Heart right ventricle (tissue), 16 donors: ENCODE measurements at regions of chr11 and their contacts with region 1.

Region 1: GRCh38 chr11:73590991-73591390 is 6.9 kb downstream of the FAM168A start:
- DNase-seq: no peak
- ATAC-seq: no peak
- H3K4me3 ChIP-seq: no peak overlapping the region
- H3K27ac ChIP-seq: no peak overlapping the region
- H3K4me1 ChIP-seq: peaks cover 0 to 13% (median 5%) of the 10 kb centered on the region in 9 donors
- H3K27me3 ChIP-seq: no peaks in the 10 kb centered on the region
- CTCF ChIP-seq: no peak

Region 2: DNA sequence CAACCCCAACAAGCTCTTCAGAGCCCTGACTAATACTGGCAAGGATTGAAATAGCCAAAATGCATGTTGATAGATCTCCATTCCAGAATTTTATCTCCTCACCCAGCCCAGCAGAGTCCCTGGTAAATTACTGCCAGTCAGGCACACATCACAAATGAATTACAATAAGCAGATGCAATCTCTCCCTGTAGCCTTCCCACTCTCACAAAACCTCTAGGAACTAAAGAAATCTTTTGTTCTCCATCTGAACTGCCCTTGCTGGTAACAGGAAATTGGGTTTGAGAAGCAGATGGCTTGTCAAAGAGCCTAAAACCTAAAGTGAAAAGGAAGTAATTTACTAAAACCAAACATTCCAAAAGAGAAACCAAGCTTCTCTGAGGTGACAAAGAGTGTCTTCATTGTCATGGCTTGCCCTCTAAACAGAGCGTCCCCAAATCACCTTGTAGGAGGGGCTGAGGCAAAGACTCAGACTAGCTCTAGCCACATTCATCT is 52.6 kb before region 1 on chr11:
- intact Hi-C with region 1: loop called in 1 of 10 experiments (anchors 5 kb)
- DNase-seq: no peak
- ATAC-seq: peak in 3 of 8 donors; percentile 10 to 55 (median 47)
- H3K4me3 ChIP-seq: no peak overlapping the region
- H3K27ac ChIP-seq: peak overlapping the region in 3 of 10 donors; percentile 7 to 41 (median 21)
- H3K4me1 ChIP-seq: peaks cover 4 to 53% (median 22%) of the 10 kb centered on the region in 9 donors
- H3K27me3 ChIP-seq: no peaks in the 10 kb centered on the region
- CTCF ChIP-seq: no peak

Region 3: GRCh38 chr11:73633999-73634398 is 43.0 kb after region 1 on chr11:
- intact Hi-C with region 1: no loop called
- DNase-seq: no peak
- ATAC-seq: no peak
- H3K4me3 ChIP-seq: no peak overlapping the region
- H3K27ac ChIP-seq: no peak overlapping the region
- H3K4me1 ChIP-seq: no peaks in the 10 kb centered on the region
- H3K27me3 ChIP-seq: no peaks in the 10 kb centered on the region
- CTCF ChIP-seq: no peak